ENCODE measurements at regions of chr19 and their contacts with region 1.

Region 1: GRCh38 chr19:8832132-8833021 is at the starts of genes MBD3L1 and ZNF558:
- DNase-seq: peak; percentile 99 to 100
- ATAC-seq: peak; percentile 94 to 96 (median 94)
- H3K4me3 ChIP-seq: peak within 1 kb of the TSS; percentile 81
- H3K27ac ChIP-seq: peak within 1 kb of the TSS; percentile 96
- H3K4me1 ChIP-seq: peaks cover 6% of the 10 kb centered on the region
- H3K27me3 ChIP-seq: peaks cover 0 to 6% (median 0%) of the 10 kb centered on the region in 3 donors
- CTCF ChIP-seq: peak; percentile 32
- total RNA-seq, gene MBD3L1: not detected
- total RNA-seq, gene ZNF558: 12.9 to 15.7 (median 14.3) TPM

Region 2: GRCh38 chr19:7069042-7069903 is 1763.1 kb before region 1 on chr19 and contains the start of gene ZNF557:
- intact Hi-C with region 1: loop called (anchors 10 kb)
- DNase-seq: peak; percentile 99
- ATAC-seq: peak; percentile 100
- H3K4me3 ChIP-seq: peak within 1 kb of the TSS; percentile 100
- H3K27ac ChIP-seq: peak within 1 kb of the TSS; percentile 90
- H3K4me1 ChIP-seq: peaks cover 7% of the 10 kb centered on the region
- H3K27me3 ChIP-seq: no peaks in the 10 kb centered on the region
- CTCF ChIP-seq: no peak
- total RNA-seq, gene ZNF557: 3.1 to 5.7 (median 3.6) TPM

Region 3: DNA sequence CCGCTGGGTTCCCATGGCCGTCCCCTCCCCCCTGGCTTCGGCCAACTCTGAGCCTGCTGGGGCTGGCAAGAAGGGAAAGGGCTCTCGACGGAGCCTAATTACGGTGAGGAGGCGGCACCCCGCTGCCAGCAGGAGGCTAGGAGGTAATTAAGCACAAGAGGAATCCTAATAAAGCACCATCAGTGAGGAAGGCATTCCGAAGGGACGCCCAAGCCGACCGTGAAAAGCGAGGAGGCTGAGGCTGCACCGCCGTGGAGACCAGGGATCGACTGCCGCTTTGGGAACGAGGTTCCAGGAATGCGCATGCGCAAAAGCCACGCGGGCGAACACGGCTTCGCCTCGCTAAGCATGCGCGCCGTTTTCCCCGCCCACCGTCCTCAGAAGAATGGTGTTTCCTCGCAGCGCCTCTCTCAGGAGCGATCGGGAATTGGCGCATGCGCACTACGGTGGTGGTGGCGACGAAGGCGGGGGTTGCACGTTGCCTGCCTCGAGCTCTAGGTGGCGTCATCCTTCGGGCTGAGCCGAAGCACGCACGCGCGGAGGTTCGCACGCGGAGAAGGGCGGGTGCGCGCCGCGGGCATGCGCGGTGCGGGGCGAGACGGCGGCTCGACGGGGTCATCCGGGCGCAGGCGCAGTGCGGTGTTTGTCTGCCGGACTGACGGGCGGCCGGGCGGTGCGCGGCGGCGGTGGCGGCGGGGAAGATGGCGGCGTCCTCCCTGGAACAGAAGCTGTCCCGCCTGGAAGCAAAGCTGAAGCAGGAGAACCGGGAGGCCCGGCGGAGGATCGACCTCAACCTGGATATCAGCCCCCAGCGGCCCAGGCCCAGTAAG is 928.9 kb before region 1 on chr19 and contains the start of gene MAP2K7:
- intact Hi-C with region 1: loop called in 1 of 2 experiments (anchors 5 kb)
- DNase-seq: peak; percentile 100
- ATAC-seq: peak; percentile 91 to 94 (median 92)
- H3K4me3 ChIP-seq: peak within 1 kb of the TSS; percentile 86
- H3K27ac ChIP-seq: peak within 1 kb of the TSS; percentile 91
- H3K4me1 ChIP-seq: peaks cover 27% of the 10 kb centered on the region
- H3K27me3 ChIP-seq: no peaks in the 10 kb centered on the region
- CTCF ChIP-seq: peak; percentile 34
- total RNA-seq, gene MAP2K7: 42.7 to 72.5 (median 55.5) TPM

Region 4: DNA sequence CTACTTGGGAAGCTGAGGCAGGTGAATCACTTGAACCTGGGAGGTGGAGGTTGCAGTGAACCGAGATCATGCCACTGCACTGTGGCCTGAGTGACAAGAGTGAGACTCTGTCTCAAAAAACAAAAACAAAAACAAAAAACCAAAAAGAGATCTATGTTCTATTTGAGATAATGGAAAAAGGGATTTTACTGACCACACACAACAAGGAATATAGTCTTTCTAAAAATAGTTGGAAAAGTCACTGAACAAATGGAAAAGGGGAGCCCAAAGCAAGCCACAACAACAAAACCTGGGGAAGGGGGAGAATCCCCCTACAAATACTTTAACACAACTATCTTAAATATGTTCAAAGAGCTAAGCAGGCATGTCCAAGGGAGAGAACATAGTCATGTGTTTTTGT is 37.6 kb before region 1 on chr19:
- intact Hi-C with region 1: no loop called
- DNase-seq: no peak
- ATAC-seq: no peak
- H3K4me3 ChIP-seq: no peak overlapping the region
- H3K27ac ChIP-seq: no peak overlapping the region
- H3K4me1 ChIP-seq: no peaks in the 10 kb centered on the region
- H3K27me3 ChIP-seq: no peaks in the 10 kb centered on the region
- CTCF ChIP-seq: no peak

Region 5: GRCh38 chr19:9818734-9819589 is 986.6 kb after region 1 on chr19 and contains the start of gene FBXL12:
- intact Hi-C with region 1: loop called in 1 of 2 experiments (anchors 5 kb)
- DNase-seq: peak; percentile 100
- ATAC-seq: peak; percentile 94 to 96 (median 94)
- H3K4me3 ChIP-seq: peak within 1 kb of the TSS; percentile 98
- H3K27ac ChIP-seq: peak within 1 kb of the TSS; percentile 93
- H3K4me1 ChIP-seq: peaks cover 13% of the 10 kb centered on the region
- H3K27me3 ChIP-seq: no peaks in the 10 kb centered on the region
- CTCF ChIP-seq: no peak
- total RNA-seq, gene FBXL12: 10.4 to 22.1 (median 12.9) TPM